ENCODE measurements at regions of chr2 and their contacts with region 1.

Region 1: DNA sequence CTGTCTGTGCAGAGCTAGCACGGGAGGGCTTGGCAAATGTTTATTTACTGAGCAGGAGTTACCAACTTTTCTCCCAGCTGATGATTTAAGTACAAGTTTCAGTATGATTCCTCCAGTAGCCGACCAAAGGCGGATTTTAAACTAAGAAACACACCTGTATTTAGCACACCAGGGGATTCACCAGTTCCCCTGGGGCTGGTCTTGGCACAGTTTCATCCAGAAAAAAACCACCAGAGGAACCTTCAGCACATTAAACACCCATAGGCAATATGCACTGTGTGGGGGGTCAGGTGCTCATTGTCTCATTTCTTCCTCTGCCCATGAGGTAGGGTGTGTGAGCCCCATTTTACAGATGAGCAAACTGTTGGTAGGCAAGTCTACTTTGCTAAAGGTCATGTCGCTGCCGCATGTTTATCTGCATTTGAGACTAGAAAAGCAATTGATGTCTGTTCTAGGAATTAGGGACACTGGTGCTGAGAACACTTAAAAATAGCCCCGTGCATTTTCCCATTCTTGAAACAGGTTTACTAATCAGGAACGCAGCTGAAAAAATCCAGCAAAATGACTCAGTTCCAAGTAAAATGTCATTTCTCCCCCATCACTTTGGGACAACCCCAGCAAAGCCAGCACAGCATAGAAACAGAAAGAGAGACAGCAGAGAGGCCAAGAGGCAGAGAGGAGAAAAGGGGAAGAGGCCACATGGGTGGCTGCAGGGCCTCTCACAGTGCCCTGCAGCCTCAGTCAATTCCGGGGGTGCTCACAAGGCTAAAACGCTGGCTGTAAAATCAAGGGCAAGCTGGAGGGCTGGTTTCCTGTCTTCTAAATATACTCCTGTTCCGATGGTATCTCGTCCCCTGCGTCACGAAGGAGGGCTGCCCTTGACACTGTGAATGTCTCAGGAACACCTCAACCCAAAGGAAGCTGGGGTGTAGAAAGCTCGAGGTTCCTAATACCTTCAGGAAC is 166.8 kb upstream of the ID2 start:
- DNase-seq: peak; percentile 58
- H3K4me3 Mint-ChIP-seq: peak overlapping the region; percentile 45
- H3K27ac Mint-ChIP-seq: peak overlapping the region; percentile 97
- H3K4me1 Mint-ChIP-seq: peaks cover 60% of the 10 kb centered on the region
- H3K27me3 Mint-ChIP-seq: no peaks in the 10 kb centered on the region

Region 2: DNA sequence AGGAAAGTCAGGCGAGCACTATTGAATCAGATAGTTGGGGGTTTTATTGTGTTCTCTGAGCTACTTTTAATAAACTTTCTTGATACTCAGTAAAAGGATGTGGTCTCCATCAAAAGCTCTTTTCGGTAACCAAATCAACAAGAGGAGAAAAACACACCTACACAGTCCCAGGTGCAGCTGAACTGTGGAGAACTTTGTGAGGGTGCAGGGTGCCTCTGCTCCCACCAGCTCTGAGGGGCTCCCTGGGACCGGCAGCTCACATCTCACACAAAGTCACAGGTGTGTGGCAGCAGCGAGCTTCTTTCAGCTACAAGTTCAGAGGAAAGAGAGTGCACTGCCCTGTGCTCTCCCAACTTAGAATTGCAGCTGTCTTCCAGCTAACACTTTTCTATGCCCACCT is 947.4 kb before region 1 on chr2:
- intact Hi-C with region 1: loop called (anchors 1 kb)
- DNase-seq: peak; percentile 53
- H3K4me3 Mint-ChIP-seq: peak overlapping the region; percentile 37
- H3K27ac Mint-ChIP-seq: peak overlapping the region; percentile 82
- H3K4me1 Mint-ChIP-seq: peaks cover 63% of the 10 kb centered on the region
- H3K27me3 Mint-ChIP-seq: no peaks in the 10 kb centered on the region

Region 3: DNA sequence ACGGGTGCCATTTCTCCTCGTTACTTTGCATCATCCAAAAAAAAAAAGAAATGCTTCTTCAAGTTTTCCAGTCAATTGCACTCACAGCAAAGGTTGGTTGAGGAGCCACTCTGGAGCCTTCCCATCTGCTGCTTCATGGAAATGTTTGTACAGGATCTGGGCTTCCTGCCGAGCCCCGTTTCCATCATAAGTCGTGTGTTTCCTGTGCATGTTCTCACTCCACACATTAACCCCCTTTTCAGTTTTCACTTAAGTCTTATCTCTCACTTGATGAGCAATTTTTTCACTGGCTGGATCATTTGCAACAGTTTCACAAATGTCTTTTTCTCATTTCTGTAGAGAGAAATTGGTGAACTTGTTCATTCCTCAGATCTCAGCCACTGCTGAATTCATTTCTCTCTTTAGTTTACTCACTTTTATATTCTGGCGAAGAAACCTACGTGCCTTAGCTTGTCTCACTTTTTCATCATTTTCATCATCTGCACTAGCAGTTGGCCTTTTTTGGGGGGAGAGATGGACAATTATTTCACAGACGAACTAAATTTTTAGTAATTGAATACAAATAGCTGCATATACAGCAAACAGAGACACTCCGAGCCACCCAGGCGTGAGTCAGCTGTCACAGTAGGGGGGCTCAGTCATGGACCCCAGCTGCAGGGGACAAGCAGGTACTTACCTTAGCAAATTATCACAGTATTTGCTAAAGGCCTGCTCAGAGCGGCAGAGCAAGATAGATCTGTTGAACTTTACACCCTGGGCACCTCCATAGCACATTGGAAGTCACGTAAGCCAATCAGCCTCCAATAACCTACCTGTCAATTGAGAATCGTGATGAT is 584.1 kb before region 1 on chr2:
- intact Hi-C with region 1: loop called (anchors 10 kb)
- DNase-seq: no peak
- H3K4me3 Mint-ChIP-seq: peak overlapping the region; percentile 17
- H3K27ac Mint-ChIP-seq: peak overlapping the region; percentile 85
- H3K4me1 Mint-ChIP-seq: peaks cover 36% of the 10 kb centered on the region
- H3K27me3 Mint-ChIP-seq: no peaks in the 10 kb centered on the region

Region 4: GRCh38 chr2:8152392-8153257 is 362.5 kb before region 1 on chr2:
- intact Hi-C with region 1: loop called (anchors 2 kb)
- DNase-seq: no peak
- H3K4me3 Mint-ChIP-seq: no peak overlapping the region
- H3K27ac Mint-ChIP-seq: no peak overlapping the region
- H3K4me1 Mint-ChIP-seq: peaks cover 42% of the 10 kb centered on the region
- H3K27me3 Mint-ChIP-seq: no peaks in the 10 kb centered on the region

Region 5: DNA sequence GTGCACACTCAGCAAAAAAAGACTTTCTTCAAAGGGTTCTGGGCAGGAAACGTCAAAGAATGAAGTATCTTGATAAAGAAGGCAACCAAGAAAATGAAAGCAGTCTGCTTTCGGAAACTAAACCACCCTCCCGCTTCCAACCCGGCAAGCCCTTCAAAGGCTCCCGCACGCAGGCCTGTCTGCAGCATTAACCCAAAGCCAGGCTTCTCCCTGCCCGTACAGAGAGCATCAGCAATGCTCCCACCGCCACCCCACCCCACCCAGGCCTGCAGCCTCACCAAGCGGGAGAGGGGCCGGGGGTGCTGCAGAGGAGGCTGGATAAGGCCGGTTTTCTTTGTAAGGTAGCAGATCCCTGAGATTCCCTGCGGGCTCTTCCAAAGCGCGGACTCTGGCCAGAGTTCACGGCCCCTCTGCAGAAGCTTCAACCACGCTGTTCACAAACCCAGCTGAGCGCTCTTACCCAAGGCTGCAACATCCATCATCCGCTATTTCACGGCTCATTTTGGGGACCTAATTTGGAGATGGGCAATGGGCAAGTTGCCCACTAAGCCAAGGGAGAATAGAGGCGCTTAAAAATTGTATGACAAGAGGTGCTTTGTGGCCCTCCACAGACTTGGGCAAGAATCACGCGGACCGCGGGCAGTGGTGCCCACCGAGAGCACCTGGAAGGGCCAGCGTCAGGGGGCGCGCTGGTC is 58.8 kb before region 1 on chr2:
- intact Hi-C with region 1: loop called (anchors 2 kb)
- DNase-seq: peak; percentile 66
- H3K4me3 Mint-ChIP-seq: peak overlapping the region; percentile 58
- H3K27ac Mint-ChIP-seq: peak overlapping the region; percentile 81
- H3K4me1 Mint-ChIP-seq: peaks cover 28% of the 10 kb centered on the region
- H3K27me3 Mint-ChIP-seq: peaks cover 19% of the 10 kb centered on the region

Region 6: GRCh38 chr2:8488001-8488738 is 26.9 kb before region 1 on chr2:
- intact Hi-C with region 1: loop called (anchors 1 kb)
- DNase-seq: no peak
- H3K4me3 Mint-ChIP-seq: peak overlapping the region; percentile 6
- H3K27ac Mint-ChIP-seq: peak overlapping the region; percentile 2
- H3K4me1 Mint-ChIP-seq: peaks cover 40% of the 10 kb centered on the region
- H3K27me3 Mint-ChIP-seq: peaks cover 6% of the 10 kb centered on the region

Region 7: GRCh38 chr2:8500124-8501058 is 14.7 kb before region 1 on chr2:
- intact Hi-C with region 1: no loop called
- DNase-seq: no peak
- H3K4me3 Mint-ChIP-seq: no peak overlapping the region
- H3K27ac Mint-ChIP-seq: no peak overlapping the region
- H3K4me1 Mint-ChIP-seq: peaks cover 14% of the 10 kb centered on the region
- H3K27me3 Mint-ChIP-seq: no peaks in the 10 kb centered on the region

Region 8: GRCh38 chr2:8525582-8526402 is 10.7 kb after region 1 on chr2:
- intact Hi-C with region 1: no loop called
- DNase-seq: no peak
- H3K4me3 Mint-ChIP-seq: no peak overlapping the region
- H3K27ac Mint-ChIP-seq: no peak overlapping the region
- H3K4me1 Mint-ChIP-seq: peaks cover 35% of the 10 kb centered on the region
- H3K27me3 Mint-ChIP-seq: peaks cover 3% of the 10 kb centered on the region

Region 9: GRCh38 chr2:8574144-8575037 is 59.3 kb after region 1 on chr2:
- intact Hi-C with region 1: no loop called
- DNase-seq: no peak
- H3K4me3 Mint-ChIP-seq: no peak overlapping the region
- H3K27ac Mint-ChIP-seq: no peak overlapping the region
- H3K4me1 Mint-ChIP-seq: peaks cover 28% of the 10 kb centered on the region
- H3K27me3 Mint-ChIP-seq: peaks cover 3% of the 10 kb centered on the region

Region 10: DNA sequence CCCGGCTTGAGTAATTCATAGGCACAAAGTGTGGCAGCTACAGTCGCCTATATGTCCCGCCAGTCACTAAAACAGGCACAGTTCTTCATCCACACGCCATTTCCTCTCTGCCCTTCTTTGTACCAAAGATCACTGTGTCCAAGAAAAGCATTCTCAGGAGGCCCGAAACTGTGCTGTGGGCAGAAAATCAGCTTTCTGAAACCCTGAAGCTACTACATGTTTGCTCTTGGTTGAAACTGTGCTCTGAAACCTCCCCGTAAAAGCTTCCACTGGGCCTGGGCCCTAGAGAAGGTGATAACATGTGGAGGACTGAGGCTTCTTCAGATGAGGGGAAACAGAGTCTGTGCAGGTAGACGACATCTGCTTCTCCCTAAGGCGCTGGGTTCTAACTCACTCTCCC is 91.1 kb after region 1 on chr2:
- intact Hi-C with region 1: loop called (anchors 1 kb)
- DNase-seq: no peak
- H3K4me3 Mint-ChIP-seq: no peak overlapping the region
- H3K27ac Mint-ChIP-seq: peak overlapping the region; percentile 53
- H3K4me1 Mint-ChIP-seq: peaks cover 55% of the 10 kb centered on the region
- H3K27me3 Mint-ChIP-seq: peaks cover 7% of the 10 kb centered on the region